ENCODE measurements at regions of chr12 and their contacts with region 1.

Region 1: GRCh38 chr12:5796171-5796958 is 148.7 kb downstream of the ANO2 start:
- H3K4me3 ChIP-seq: no peak overlapping the region
- H3K27ac ChIP-seq: no peak overlapping the region
- H3K4me1 ChIP-seq: no peaks in the 10 kb centered on the region
- CTCF ChIP-seq: peak; percentile 84

Region 2: GRCh38 chr12:5806371-5807089 is 10.2 kb after region 1 on chr12:
- CTCF ChIA-PET with region 1: interaction called, 12 read pairs
- POLR2A ChIA-PET with region 1: no interaction called
- H3K4me3 ChIP-seq: no peak overlapping the region
- H3K27ac ChIP-seq: no peak overlapping the region
- H3K4me1 ChIP-seq: no peaks in the 10 kb centered on the region
- CTCF ChIP-seq: no peak